SK-N-SH (cell line): ENCODE measurements at regions of chr2 and their contacts with region 1.

Region 1: GRCh38 chr2:198296665-198297308 is 492.4 kb downstream of the PLCL1 start:
- DNase-seq: peak; percentile 73
- H3K4me3 ChIP-seq: no peak overlapping the region
- H3K27ac ChIP-seq: no peak overlapping the region
- H3K4me1 ChIP-seq: no peaks in the 10 kb centered on the region
- H3K27me3 ChIP-seq: no peaks in the 10 kb centered on the region; the same call in 1 of the 2 replicates
- CTCF ChIP-seq: peak; percentile 78
- EP300 ChIP-seq: no peak
- RAD21 ChIP-seq: peak; percentile 96

Region 2: GRCh38 chr2:197777823-197778407 is 518.9 kb before region 1 on chr2:
- CTCF ChIA-PET with region 1: interaction called, 10 read pairs
- POLR2A ChIA-PET with region 1: no interaction called
- DNase-seq: peak; percentile 30
- H3K4me3 ChIP-seq: no peak overlapping the region; a peak in 1 of 4 replicates
- H3K27ac ChIP-seq: no peak overlapping the region
- H3K4me1 ChIP-seq: no peaks in the 10 kb centered on the region; a peak in 2 of 4 replicates
- H3K27me3 ChIP-seq: no peaks in the 10 kb centered on the region
- CTCF ChIP-seq: peak; percentile 88
- EP300 ChIP-seq: no peak
- RAD21 ChIP-seq: peak; percentile 90

Region 3: DNA sequence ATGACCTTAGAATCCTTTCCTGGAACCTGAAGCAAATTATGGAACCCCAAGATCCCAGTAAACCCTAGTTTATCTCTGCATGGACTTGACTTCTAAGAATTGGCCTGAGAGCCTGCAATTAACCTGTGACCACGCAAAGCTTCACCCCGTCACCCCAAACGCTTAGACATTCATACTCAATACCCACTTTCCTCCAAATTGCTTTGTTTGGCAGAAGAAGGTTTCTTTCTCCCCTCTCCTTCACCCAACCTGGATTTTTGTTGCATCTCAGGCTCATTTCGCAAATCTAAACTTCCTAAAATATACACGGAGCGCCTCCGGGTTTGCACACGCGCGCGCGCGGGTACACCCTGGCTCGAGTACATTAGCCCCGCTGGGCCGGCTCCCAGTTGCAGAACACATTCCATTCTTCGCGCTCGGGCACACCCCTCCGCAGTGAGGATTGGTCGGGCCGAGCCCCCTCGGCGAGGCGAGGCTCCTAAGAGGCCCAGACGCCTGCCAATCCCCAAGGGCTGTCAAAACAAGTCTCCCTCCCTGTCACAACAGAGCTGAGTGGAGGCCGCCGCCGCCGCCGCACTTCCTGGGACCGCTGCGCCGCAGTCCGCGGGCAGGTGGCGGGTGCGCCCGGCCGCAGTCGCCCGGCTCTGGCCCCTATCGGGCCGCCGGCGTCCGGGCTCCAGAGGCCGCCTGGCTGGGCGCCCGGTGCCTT is 492.6 kb before region 1 on chr2 and contains the start of gene PLCL1:
- CTCF ChIA-PET with region 1: interaction called, 69 read pairs
- POLR2A ChIA-PET with region 1: no interaction called
- DNase-seq: peak; percentile 93
- H3K4me3 ChIP-seq: peak within 1 kb of the TSS; percentile 85 to 92
- H3K27ac ChIP-seq: peak within 1 kb of the TSS in 1 of 2 experiments; percentile 51; a peak in 2 of 4 replicates
- H3K4me1 ChIP-seq: peaks cover 0 to 10% of the 10 kb centered on the region in 2 experiments; a peak in 2 of 4 replicates
- H3K27me3 ChIP-seq: no peaks in the 10 kb centered on the region
- CTCF ChIP-seq: 0 out of 2 replicates have a peak, but pooled peaks have one; percentile 6
- EP300 ChIP-seq: no peak
- RAD21 ChIP-seq: no peak
- polyA plus RNA-seq, gene PLCL1: 7.7 and 10.3 TPM in 2 replicates

Region 4: DNA sequence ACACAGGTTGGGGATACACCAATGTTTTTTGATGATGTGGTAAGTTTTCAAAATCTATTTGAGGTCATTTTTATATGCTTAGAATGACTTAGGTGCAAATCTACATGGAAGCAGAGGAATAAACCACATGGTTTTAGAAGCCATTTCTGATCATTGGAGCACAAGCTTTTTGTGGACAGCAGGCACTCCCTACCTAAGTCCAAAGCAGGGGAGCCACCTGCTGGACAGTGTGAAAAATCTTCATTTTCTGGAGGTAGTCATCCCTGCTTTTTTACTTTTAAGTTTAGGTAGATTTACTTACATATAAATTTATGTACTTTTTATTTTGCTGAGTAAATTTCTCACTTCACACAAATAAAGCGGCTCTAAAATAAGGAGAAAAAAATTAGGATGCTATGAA is 169.2 kb before region 1 on chr2:
- CTCF ChIA-PET with region 1: interaction called, 38 read pairs
- POLR2A ChIA-PET with region 1: no interaction called
- DNase-seq: peak; percentile 26
- H3K4me3 ChIP-seq: no peak overlapping the region
- H3K27ac ChIP-seq: no peak overlapping the region
- H3K4me1 ChIP-seq: no peaks in the 10 kb centered on the region; a peak in 2 of 4 replicates
- H3K27me3 ChIP-seq: no peaks in the 10 kb centered on the region
- CTCF ChIP-seq: peak; percentile 73
- EP300 ChIP-seq: no peak
- RAD21 ChIP-seq: peak; percentile 92

Region 5: GRCh38 chr2:198214114-198214596 is 82.6 kb before region 1 on chr2:
- CTCF ChIA-PET with region 1: no interaction called
- POLR2A ChIA-PET with region 1: no interaction called
- DNase-seq: no peak
- H3K4me3 ChIP-seq: no peak overlapping the region
- H3K27ac ChIP-seq: no peak overlapping the region
- H3K4me1 ChIP-seq: peaks cover 0 to 5% of the 10 kb centered on the region in 2 experiments; a peak in 2 of 4 replicates
- H3K27me3 ChIP-seq: no peaks in the 10 kb centered on the region
- CTCF ChIP-seq: no peak
- EP300 ChIP-seq: no peak
- RAD21 ChIP-seq: no peak

Region 6: DNA sequence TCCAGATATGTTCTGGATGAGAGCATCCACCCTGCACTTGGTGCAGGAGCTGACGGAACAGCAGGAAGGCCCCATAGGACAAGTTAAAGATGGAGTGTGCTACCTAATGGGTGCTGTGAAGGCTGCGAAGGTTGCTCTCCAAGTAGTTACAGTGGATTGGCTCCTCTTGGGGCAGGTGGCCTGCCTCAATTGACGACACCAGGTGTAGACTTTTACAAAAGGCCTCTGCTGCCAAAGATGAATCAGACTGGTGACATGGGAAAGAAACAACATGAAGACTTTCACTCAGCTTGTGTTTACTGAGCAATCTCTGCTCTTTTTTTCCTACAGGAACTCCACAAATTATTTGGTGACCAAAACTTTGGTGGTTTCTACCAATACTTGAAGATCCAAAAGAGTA is 54.7 kb before region 1 on chr2:
- CTCF ChIA-PET with region 1: interaction called, 10 read pairs
- POLR2A ChIA-PET with region 1: no interaction called
- DNase-seq: no peak
- H3K4me3 ChIP-seq: no peak overlapping the region
- H3K27ac ChIP-seq: no peak overlapping the region
- H3K4me1 ChIP-seq: peaks cover 0 to 9% of the 10 kb centered on the region in 2 experiments; a peak in 2 of 4 replicates
- H3K27me3 ChIP-seq: 0 out of 2 replicates have a peak, but pooled peaks cover 5% of the 10 kb centered on the region
- CTCF ChIP-seq: no peak
- EP300 ChIP-seq: no peak
- RAD21 ChIP-seq: no peak

Region 7: GRCh38 chr2:198309673-198310280 is 13.0 kb after region 1 on chr2:
- CTCF ChIA-PET with region 1: interaction called, 53 read pairs
- POLR2A ChIA-PET with region 1: no interaction called
- DNase-seq: peak; percentile 48
- H3K4me3 ChIP-seq: no peak overlapping the region
- H3K27ac ChIP-seq: no peak overlapping the region
- H3K4me1 ChIP-seq: no peaks in the 10 kb centered on the region
- H3K27me3 ChIP-seq: peaks cover 22% of the 10 kb centered on the region
- CTCF ChIP-seq: peak; percentile 92
- EP300 ChIP-seq: no peak
- RAD21 ChIP-seq: peak; percentile 67